ENCODE measurements at regions of chr7 and their contacts with region 1.

Region 1: DNA sequence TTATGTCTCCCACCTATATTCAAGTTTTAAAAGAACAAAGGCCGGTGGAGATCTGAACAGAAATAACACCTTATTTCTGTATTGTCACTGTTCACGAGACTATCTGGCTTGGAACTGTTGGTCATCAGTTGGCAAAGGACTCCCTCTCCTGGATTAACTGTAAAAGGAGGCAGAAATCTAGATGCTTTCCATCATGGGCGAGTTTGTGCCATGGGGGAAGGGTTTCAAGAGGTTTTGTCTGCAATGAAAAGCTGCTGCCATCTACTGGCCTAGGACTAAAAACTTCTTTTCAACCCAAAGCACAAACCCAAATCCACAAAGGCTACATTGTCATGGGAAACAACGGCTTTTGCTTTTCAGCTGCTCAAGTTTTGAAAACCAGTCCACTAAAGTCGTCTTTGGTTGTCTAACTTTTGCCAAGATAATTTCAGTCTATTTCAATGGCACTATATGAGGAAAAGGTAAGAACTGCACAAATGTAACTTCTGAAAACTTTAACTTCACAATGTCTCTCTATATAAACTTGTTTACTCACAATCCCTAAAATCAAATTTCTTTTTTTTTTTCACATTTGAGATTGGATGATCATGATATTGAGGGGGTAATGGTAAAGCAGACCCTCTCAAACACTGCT is 196.8 kb downstream of the SKAP2 start:
- DNase-seq: peak in 1 of 2 donors; percentile 75
- ATAC-seq: peak in 7 of 8 donors; percentile 64 to 87 (median 75)
- H3K4me3 ChIP-seq: no peak overlapping the region
- H3K27ac ChIP-seq: no peak overlapping the region
- H3K4me1 ChIP-seq: peaks cover 0 to 7% (median 0%) of the 10 kb centered on the region in 9 donors
- H3K27me3 ChIP-seq: peaks cover 0 to 55% (median 40%) of the 10 kb centered on the region in 7 donors
- CTCF ChIP-seq: peak; percentile 49 to 87 (median 76)

Region 2: DNA sequence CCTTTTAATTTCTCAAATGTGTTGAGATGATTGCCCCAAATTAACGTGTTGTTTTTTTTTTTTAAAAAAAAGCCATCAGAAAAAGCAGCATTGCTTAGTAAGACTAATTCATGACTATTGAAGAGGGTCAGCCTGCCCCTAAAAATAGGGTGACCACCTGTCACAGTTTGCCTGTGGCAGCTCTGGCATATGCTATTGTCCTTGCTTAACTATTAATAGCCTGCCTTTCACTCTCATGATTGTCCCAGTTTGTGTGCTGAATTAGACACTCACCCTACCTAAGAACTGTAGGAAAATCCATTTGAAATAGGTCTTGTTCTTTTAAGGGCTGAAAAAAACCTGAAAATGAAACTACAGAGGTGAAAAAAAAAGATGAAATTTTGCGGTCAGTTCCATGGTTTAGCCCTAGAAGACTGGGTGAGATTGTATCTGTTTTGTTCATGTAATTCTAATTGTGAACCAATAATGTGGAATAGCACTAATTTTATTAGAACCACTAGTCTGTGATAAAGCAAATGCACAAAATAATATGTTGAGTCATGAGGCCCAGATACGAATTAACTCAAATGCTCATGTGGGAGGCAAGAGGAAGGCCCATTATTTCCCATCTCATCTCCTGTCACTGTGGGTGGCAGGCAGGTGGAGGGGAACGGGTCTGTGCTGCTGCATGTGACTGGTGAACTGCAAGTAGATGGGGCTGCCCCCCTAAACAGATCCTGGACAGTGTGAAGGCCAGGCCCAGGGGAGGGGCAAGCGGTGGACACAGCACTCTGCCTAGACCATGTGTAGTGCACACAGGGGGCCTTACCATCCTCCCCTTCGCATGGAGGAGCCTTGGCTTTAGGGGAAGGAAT is 781.0 kb before region 1 on chr7:
- intact Hi-C with region 1: loop called in 8 of 10 experiments (anchors 5 to 10 kb)
- DNase-seq: no peak
- ATAC-seq: peak in 3 of 8 donors; percentile 55 to 72 (median 64)
- H3K4me3 ChIP-seq: no peak overlapping the region
- H3K27ac ChIP-seq: no peak overlapping the region
- H3K4me1 ChIP-seq: peaks cover 0 to 5% (median 0%) of the 10 kb centered on the region in 9 donors
- H3K27me3 ChIP-seq: peaks cover 6 to 82% (median 74%) of the 10 kb centered on the region in 7 donors
- CTCF ChIP-seq: no peak

Region 3: DNA sequence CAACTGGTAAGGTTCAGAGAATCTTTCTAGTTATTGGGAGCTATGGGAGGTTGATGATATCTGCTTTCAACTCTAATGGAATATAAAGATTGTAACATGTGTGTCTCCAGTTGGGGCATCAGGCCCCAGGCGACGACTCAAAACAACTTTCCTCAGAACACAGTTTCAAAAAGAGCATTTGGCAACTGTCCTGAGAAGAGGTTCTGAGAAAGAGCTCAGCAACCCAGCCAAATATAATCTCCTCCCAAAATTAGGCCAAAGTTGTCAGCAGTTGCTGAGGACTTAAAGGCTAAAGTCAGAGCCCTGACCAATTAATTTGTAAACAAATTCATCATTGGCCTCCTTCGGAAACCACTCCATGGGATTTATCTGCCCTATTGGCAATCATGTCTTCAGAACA is 766.7 kb before region 1 on chr7:
- intact Hi-C with region 1: loop called in 5 of 10 experiments (anchors 5 to 10 kb)
- DNase-seq: no peak
- ATAC-seq: no peak
- H3K4me3 ChIP-seq: no peak overlapping the region
- H3K27ac ChIP-seq: no peak overlapping the region
- H3K4me1 ChIP-seq: no peaks in the 10 kb centered on the region
- H3K27me3 ChIP-seq: peaks cover 0 to 43% (median 22%) of the 10 kb centered on the region in 7 donors
- CTCF ChIP-seq: no peak

Region 4: DNA sequence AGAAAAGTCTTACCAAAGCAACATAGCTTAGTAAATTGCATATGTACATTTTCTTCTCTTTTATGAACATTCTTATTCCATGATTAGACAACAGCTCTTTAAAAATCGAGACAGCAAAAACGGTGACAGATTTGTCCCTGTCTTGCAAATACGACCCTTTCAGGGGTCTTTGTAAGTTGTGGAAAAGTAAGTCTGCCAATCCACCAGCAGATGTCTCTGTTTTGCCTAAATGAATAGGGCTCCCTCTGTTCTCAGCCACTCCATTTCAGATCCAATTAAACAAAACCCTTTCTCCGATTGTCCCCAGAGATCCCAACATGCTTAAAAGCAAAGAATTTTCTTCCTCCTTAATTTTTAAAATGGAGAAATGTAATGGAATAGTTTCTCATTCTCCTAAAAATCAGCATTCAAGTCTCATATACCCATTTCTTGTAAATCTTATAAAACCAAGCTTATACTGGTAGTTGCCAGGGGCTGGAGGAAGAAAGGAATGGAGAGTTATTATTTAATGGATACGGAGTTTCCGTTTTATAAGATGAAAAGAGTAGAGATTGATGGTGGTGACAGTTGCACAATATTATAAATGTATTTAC is 576.6 kb before region 1 on chr7:
- intact Hi-C with region 1: loop called in 5 of 10 experiments (anchors 10 kb)
- DNase-seq: no peak
- ATAC-seq: peak in 2 of 8 donors; percentile 57 to 69
- H3K4me3 ChIP-seq: peak overlapping the region in 1 of 10 donors; percentile 13
- H3K27ac ChIP-seq: no peak overlapping the region
- H3K4me1 ChIP-seq: peaks cover 0 to 9% (median 0%) of the 10 kb centered on the region in 9 donors
- H3K27me3 ChIP-seq: peaks cover 0 to 12% (median 0%) of the 10 kb centered on the region in 7 donors
- CTCF ChIP-seq: peak; percentile 45 to 79 (median 68)

Region 5: GRCh38 chr7:26376175-26376917 is 291.3 kb before region 1 on chr7:
- intact Hi-C with region 1: loop called in 5 of 10 experiments (anchors 2 to 5 kb)
- DNase-seq: peak in 1 of 2 donors; percentile 21
- ATAC-seq: peak; percentile 33 to 73 (median 40)
- H3K4me3 ChIP-seq: peak overlapping the region; percentile 9 to 52 (median 38)
- H3K27ac ChIP-seq: no peak overlapping the region
- H3K4me1 ChIP-seq: peaks cover 2 to 14% (median 6%) of the 10 kb centered on the region in 9 donors
- H3K27me3 ChIP-seq: peaks cover 29 to 98% (median 95%) of the 10 kb centered on the region in 7 donors
- CTCF ChIP-seq: no peak